MCF 10A (cell line): ENCODE measurements at regions of chr17 and their contacts with region 1.

Region 1: DNA sequence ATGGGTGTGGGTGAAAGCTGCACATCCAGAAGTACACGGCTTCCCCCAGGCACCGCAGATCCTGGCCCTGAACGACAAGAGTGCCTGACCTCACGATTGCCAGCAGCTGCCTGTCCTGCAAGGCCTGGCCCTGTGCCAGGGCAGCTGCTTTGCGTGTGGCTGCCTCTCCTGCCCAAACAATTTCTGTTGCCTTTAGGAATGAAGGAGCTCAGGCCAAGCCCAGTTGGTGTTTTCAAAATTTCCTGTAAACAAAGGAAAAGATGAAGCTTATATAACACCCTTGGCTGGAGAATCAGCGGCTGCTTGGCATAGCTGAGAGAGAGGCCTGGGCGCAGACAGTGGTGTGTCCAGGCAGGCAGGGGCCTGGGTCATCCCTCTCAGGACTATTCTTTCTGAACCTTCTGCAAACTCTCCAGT is 11.7 kb upstream of the SLC47A2 start:
- DNase-seq: peak; percentile 96
- H3K4me3 Mint-ChIP-seq: no peak overlapping the region
- H3K27ac Mint-ChIP-seq: peak overlapping the region; percentile 97
- H3K4me1 Mint-ChIP-seq: peaks cover 25% of the 10 kb centered on the region
- H3K27me3 Mint-ChIP-seq: no peaks in the 10 kb centered on the region
- CTCF ChIP-seq: no peak

Region 2: GRCh38 chr17:19706791-19707727 is 21.0 kb before region 1 on chr17:
- CTCF ChIA-PET with region 1: interaction called, 7 read pairs
- POLR2A ChIA-PET with region 1: interaction called, 26 read pairs
- intact Hi-C with region 1: no loop called
- DNase-seq: peak; percentile 87
- H3K4me3 Mint-ChIP-seq: no peak overlapping the region
- H3K27ac Mint-ChIP-seq: peak overlapping the region; percentile 27
- H3K4me1 Mint-ChIP-seq: peaks cover 10% of the 10 kb centered on the region
- H3K27me3 Mint-ChIP-seq: no peaks in the 10 kb centered on the region
- CTCF ChIP-seq: no peak

Region 3: DNA sequence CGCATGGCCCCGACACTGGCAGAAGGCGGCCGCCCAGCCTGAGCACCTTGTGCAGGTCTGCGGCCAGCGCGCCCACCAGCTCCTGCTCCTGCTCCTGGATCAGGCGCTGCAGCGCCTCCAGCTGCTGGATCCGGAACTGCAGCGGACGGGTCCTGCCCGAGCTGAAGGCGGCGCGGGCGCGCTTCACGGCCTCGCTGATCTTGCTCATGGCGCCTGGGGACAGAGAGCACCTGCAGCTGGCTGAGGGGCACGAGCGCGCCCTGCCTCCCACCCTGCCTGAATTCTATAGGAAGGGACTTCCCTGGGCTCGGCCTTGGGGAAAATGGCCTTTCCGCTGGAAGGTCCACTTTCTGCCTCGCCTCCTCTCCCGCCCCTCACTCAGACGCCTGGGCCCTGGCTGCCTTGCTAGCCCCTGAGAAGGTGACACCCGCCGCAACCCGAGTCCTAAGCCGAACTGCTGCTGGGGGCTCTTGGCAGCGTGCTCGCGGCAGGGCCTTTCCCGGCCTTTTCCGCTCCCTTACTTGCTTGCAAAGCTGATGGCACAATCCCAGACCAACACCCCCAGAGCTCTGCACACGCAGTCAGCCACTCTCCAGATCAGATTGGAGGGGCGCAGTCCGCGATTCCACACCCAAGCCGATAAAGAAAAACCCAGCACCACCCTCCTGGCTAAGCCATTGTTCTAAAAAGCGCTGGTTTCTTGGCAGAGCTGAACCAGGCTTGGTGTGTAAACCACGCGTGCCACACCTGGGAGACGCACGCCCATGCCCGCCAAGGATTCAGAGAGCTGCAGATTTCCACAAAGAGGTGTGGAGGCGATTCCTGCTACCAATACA is 17.1 kb after region 1 on chr17:
- CTCF ChIA-PET with region 1: interaction called, 11 read pairs
- POLR2A ChIA-PET with region 1: interaction called, 311 read pairs
- intact Hi-C with region 1: no loop called
- DNase-seq: peak; percentile 66
- H3K4me3 Mint-ChIP-seq: peak overlapping the region; percentile 29
- H3K27ac Mint-ChIP-seq: peak overlapping the region; percentile 39
- H3K4me1 Mint-ChIP-seq: peaks cover 42% of the 10 kb centered on the region
- H3K27me3 Mint-ChIP-seq: no peaks in the 10 kb centered on the region
- CTCF ChIP-seq: peak; percentile 74

Region 4: DNA sequence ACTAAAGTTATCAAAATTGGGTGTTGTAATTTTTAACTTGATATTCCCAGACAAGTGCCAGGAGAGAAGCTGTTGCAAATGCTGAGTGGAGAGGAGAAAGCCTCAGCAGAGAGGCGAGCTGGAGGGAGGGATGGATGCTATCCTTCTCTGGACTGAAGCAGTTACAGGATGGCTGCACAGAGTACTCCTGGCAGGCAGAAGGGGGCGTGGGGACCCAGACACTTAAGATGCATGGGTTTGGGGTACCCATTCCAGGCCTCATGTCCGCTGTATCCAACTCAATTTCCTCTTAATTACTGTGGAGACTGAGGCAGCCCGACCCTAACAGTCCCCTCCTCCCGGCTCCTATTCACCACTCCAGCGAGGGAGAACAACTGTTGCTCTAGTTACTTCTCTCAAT is 45.4 kb after region 1 on chr17:
- CTCF ChIA-PET with region 1: no interaction called
- POLR2A ChIA-PET with region 1: no interaction called
- intact Hi-C with region 1: no loop called
- DNase-seq: no peak
- H3K4me3 Mint-ChIP-seq: no peak overlapping the region
- H3K27ac Mint-ChIP-seq: no peak overlapping the region
- H3K4me1 Mint-ChIP-seq: no peaks in the 10 kb centered on the region
- H3K27me3 Mint-ChIP-seq: no peaks in the 10 kb centered on the region
- CTCF ChIP-seq: no peak

Region 5: GRCh38 chr17:19805006-19805405 is 76.9 kb after region 1 on chr17:
- CTCF ChIA-PET with region 1: no interaction called
- POLR2A ChIA-PET with region 1: no interaction called
- intact Hi-C with region 1: no loop called
- DNase-seq: no peak
- H3K4me3 Mint-ChIP-seq: no peak overlapping the region
- H3K27ac Mint-ChIP-seq: no peak overlapping the region
- H3K4me1 Mint-ChIP-seq: no peaks in the 10 kb centered on the region
- H3K27me3 Mint-ChIP-seq: no peaks in the 10 kb centered on the region
- CTCF ChIP-seq: no peak

Region 6: DNA sequence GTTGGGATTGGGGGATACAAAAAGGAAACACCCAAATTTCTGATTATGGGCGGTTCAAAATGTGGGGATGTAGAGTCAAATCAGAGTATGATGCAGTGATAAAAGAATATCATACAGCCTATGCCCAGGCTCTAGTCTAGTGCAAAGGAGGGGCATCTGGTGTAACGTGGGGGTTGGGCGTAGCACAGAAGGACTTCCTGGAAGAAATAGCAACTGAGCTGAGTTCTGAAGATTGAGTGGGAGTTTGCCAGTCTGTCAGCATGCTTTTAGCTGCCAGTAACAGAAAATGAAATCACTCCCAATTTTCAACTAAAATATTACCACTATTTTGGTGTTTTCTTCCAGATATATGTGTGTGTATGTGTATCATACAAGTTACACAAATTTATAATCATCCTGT is 478.0 kb after region 1 on chr17:
- CTCF ChIA-PET with region 1: no interaction called
- POLR2A ChIA-PET with region 1: no interaction called
- intact Hi-C with region 1: no loop called
- DNase-seq: peak; percentile 52
- H3K4me3 Mint-ChIP-seq: peak overlapping the region; percentile 11
- H3K27ac Mint-ChIP-seq: peak overlapping the region; percentile 81
- H3K4me1 Mint-ChIP-seq: peaks cover 36% of the 10 kb centered on the region
- H3K27me3 Mint-ChIP-seq: no peaks in the 10 kb centered on the region
- CTCF ChIP-seq: no peak